ENCODE measurements at regions of chr4 and their contacts with region 1.

Region 1: DNA sequence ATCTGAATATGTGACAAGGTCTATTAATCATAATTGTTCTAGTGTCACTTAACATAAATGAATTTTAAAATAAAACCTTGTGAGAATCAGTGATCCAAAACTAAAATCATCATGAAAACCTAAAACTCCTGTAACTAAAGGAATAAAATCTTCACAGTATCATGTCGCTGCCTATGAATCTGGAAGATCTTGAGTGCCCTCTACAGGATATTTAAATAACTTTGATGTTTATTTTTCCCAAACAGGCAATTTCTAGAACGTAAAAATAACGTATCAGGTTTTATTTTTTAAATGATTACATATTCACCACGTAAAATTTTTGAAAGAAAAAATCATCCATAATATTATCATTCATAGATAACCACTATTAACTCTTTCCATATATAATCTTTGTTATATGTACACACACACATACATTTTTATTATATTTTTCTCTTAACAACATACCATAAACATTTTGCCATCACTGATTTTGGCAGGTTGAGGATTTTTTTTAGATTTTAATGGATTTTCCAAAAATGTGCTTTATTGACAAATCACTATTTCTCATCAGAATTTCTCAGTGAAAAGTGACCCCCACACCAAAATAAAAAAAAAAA is 79.6 kb downstream of the COMMD8 start:
- DNase-seq: no peak

Region 2: DNA sequence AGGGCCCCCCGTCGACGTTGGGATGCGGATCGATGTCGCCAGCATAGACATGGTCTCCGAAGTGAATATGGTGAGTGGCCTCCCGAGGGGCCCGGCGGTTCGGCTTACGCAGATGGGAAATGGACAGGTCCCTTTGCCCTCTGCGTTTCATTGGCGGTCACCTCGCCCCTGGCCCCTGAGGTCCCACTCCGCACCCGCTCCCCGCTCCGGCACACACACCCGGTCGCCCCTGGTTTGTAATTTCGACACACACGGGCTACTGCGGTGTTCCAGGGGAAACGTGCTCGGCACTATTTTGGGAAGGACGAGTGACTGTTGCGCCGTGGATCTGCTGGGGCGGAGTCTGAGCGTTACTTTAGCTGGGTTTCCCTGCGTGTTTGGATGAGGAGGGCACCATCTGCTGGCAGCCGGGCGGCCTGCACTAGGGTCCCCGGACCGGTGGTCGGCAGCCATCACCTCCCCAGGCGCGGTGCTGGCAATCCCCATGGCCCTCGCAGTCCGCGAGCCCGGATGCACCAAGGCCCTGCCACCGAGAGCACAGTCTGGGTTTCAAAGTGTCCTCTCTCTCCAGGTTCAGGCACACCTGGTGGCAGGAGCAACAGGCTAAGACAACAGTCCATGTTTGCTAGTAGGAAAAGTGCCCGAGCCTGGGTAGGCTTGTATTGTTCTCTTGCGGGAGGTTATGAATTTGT is 351.4 kb before region 1 on chr4:
- intact Hi-C with region 1: loop called (anchors 10 kb)
- DNase-seq: peak; percentile 81

Region 3: DNA sequence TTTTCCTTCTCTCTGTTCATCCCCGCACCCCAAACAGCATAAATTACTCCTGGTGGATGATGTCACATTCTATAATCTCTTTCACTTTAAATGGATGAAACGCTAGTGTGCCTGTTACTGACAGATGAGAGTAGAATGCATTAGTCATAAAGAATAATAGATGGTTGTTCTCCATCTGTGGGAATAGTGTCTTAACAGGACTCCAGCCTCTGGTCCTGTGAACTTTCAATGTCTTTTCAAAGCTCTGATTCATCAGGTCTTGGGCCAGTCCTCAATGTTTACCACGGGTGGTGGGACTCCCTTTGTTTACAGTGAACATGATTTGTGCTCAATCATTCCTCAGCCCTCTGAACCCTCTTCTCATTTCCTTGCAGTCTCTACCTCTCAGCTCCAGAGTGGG is 170.0 kb before region 1 on chr4:
- intact Hi-C with region 1: no loop called
- DNase-seq: no peak

Measured in cardiac septum (tissue), 1 donor.